PC-9 (cell line): ENCODE measurements at regions of chr7 and their contacts with region 1.

Region 1: GRCh38 chr7:40996233-40996677 is 706.6 kb downstream of the INHBA start:
- DNase-seq: no peak
- H3K4me3 ChIP-seq: no peak overlapping the region
- H3K27ac ChIP-seq: no peak overlapping the region
- H3K4me1 ChIP-seq: 0 out of 2 replicates have a peak, but pooled peaks cover 7% of the 10 kb centered on the region
- H3K27me3 ChIP-seq: no peaks in the 10 kb centered on the region
- CTCF ChIP-seq: no peak

Region 2: GRCh38 chr7:40959955-40960354 is 36.3 kb before region 1 on chr7:
- CTCF ChIA-PET with region 1: no interaction called
- POLR2A ChIA-PET with region 1: no interaction called
- intact Hi-C with region 1: no loop called
- DNase-seq: no peak
- H3K4me3 ChIP-seq: no peak overlapping the region
- H3K27ac ChIP-seq: no peak overlapping the region
- H3K4me1 ChIP-seq: no peaks in the 10 kb centered on the region
- H3K27me3 ChIP-seq: no peaks in the 10 kb centered on the region
- CTCF ChIP-seq: no peak

Region 3: GRCh38 chr7:41013117-41013516 is 16.9 kb after region 1 on chr7:
- CTCF ChIA-PET with region 1: no interaction called
- POLR2A ChIA-PET with region 1: interaction called, 12 read pairs
- intact Hi-C with region 1: no loop called
- DNase-seq: no peak
- H3K4me3 ChIP-seq: no peak overlapping the region
- H3K27ac ChIP-seq: no peak overlapping the region
- H3K4me1 ChIP-seq: no peaks in the 10 kb centered on the region
- H3K27me3 ChIP-seq: no peaks in the 10 kb centered on the region
- CTCF ChIP-seq: no peak